Naive thymus-derived CD4-positive, alpha-beta T cell (primary cell): ENCODE measurements at regions of chr6 and their contacts with region 1.

Region 1: GRCh38 chr6:4155848-4156466 is 20.6 kb upstream of the ECI2 start:
- DNase-seq: peak; percentile 33 to 81 (median 71)
- ATAC-seq: peak; percentile 95
- H3K4me3 ChIP-seq: no peak overlapping the region
- H3K4me3 Mint-ChIP-seq: peak overlapping the region in 2 of 10 donors; percentile 20 to 29
- H3K27ac ChIP-seq: no peak overlapping the region
- H3K27ac Mint-ChIP-seq: no peak overlapping the region
- H3K4me1 ChIP-seq: no peaks in the 10 kb centered on the region
- H3K4me1 Mint-ChIP-seq: peaks cover 0 to 24% (median 5%) of the 10 kb centered on the region in 7 donors
- H3K27me3 ChIP-seq: no peaks in the 10 kb centered on the region
- H3K27me3 Mint-ChIP-seq: peaks cover 0 to 12% (median 6%) of the 10 kb centered on the region in 5 donors

Region 2: DNA sequence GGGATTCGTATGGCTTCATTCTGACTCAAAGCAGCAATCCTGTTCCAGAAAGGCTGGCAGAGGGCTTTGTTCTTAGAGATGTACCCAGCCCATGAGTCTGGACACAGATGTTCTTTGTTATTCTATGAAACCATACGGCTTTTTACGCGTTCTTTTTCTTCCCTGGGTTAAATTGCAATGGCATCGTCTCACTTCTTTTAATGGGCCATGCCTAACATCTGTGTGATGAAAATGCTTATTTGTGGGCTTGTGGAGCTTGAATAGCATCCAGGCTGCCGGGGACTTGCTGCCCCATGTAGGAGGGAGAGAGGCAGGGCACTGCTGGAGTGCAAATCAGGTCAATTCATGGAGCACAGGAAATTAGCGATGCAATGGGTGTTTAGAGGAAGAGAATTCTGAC is 287.4 kb before region 1 on chr6:
- CTCF ChIA-PET with region 1: no interaction called
- POLR2A ChIA-PET with region 1: no interaction called
- intact Hi-C with region 1: no loop called
- DNase-seq: no peak
- ATAC-seq: no peak
- H3K4me3 ChIP-seq: no peak overlapping the region
- H3K4me3 Mint-ChIP-seq: no peak overlapping the region
- H3K27ac ChIP-seq: no peak overlapping the region
- H3K27ac Mint-ChIP-seq: peak overlapping the region in 1 of 9 donors; percentile 65
- H3K4me1 ChIP-seq: peaks cover 0 to 15% of the 10 kb centered on the region in 2 donors
- H3K4me1 Mint-ChIP-seq: peaks cover 0 to 22% (median 14%) of the 10 kb centered on the region in 7 donors
- H3K27me3 ChIP-seq: no peaks in the 10 kb centered on the region
- H3K27me3 Mint-ChIP-seq: peaks cover 7 to 19% (median 15%) of the 10 kb centered on the region in 5 donors

Region 3: DNA sequence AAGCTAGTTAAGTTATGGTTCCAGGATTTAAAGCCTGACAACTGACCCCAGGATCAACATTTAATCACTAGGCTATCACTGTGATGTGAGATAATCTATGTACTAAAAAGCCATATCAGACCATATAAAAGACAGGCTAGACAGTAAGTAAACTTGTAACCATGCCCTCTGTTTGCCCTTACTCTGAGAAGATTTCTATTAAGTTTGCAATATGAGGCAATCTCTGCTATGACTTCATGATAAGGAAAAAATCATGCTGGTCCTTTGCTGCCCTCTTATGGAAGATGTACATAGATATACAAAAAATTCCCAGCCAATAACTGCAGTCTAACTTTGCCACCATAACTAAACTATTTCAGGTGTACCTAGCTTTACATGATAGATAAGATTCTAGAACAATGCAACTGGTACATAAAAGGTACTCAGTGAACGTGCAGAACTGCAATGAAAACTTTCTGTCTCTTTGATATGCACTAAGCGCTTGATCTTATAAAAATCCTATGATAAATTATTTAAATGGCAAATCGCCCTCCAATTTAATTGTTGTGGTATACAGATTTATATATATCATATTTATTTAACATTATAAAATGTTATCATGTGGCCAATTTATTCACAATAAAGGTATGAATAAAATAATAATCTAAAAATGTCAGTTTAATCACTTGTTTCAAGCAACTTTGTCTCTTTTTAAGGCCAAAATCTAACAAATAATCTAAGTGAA is 147.5 kb before region 1 on chr6:
- CTCF ChIA-PET with region 1: no interaction called
- POLR2A ChIA-PET with region 1: no interaction called
- intact Hi-C with region 1: loop called in 1 of 2 experiments (anchors 1 kb)
- DNase-seq: peak in 7 of 9 donors; percentile 27 to 63 (median 57)
- ATAC-seq: peak; percentile 94
- H3K4me3 ChIP-seq: no peak overlapping the region
- H3K4me3 Mint-ChIP-seq: peak overlapping the region in 1 of 10 donors; percentile 36
- H3K27ac ChIP-seq: no peak overlapping the region
- H3K27ac Mint-ChIP-seq: peak overlapping the region in 3 of 9 donors; percentile 0 to 63 (median 43)
- H3K4me1 ChIP-seq: peaks cover 15 to 27% of the 10 kb centered on the region in 2 donors
- H3K4me1 Mint-ChIP-seq: peaks cover 40 to 71% (median 60%) of the 10 kb centered on the region in 7 donors
- H3K27me3 ChIP-seq: no peaks in the 10 kb centered on the region
- H3K27me3 Mint-ChIP-seq: no peaks in the 10 kb centered on the region

Region 4: GRCh38 chr6:4055420-4056041 is 100.4 kb before region 1 on chr6:
- CTCF ChIA-PET with region 1: interaction called, 37 read pairs
- POLR2A ChIA-PET with region 1: interaction called, 3 read pairs
- intact Hi-C with region 1: loop called (anchors 1 kb)
- DNase-seq: no peak
- ATAC-seq: peak; percentile 25
- H3K4me3 ChIP-seq: no peak overlapping the region
- H3K4me3 Mint-ChIP-seq: no peak overlapping the region
- H3K27ac ChIP-seq: no peak overlapping the region
- H3K27ac Mint-ChIP-seq: peak overlapping the region in 3 of 9 donors; percentile 63 to 82 (median 64)
- H3K4me1 ChIP-seq: peaks cover 0 to 9% of the 10 kb centered on the region in 2 donors
- H3K4me1 Mint-ChIP-seq: peaks cover 9 to 36% (median 17%) of the 10 kb centered on the region in 7 donors
- H3K27me3 ChIP-seq: no peaks in the 10 kb centered on the region
- H3K27me3 Mint-ChIP-seq: no peaks in the 10 kb centered on the region

Region 5: DNA sequence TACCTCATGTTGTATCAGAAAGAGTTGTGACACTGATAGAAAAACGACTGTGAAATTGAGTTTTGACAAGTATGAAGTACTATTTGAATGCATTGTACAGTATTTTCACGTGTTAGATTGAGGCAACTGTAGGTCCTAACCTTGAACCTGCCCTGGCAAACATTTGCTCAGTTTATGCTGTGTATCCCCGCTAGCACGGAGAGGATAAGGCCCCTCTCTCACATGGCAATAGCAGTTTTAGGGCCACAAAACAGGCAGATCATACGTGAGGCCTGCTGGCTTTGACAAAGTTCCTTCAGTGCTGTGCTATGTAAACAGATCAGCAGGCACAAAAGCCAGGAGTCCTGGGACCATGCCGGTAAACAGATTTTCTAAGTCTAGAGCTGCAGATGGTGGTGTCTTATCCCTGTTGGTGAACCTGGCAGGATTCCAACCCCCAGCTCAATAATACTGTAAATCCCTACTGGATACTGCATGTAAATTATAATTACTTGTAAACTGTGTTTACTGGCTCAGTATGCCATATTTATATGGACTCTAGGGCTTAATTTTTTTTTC is 53.2 kb before region 1 on chr6:
- CTCF ChIA-PET with region 1: no interaction called
- POLR2A ChIA-PET with region 1: no interaction called
- intact Hi-C with region 1: no loop called
- DNase-seq: no peak
- ATAC-seq: no peak
- H3K4me3 ChIP-seq: no peak overlapping the region
- H3K4me3 Mint-ChIP-seq: no peak overlapping the region
- H3K27ac ChIP-seq: no peak overlapping the region
- H3K27ac Mint-ChIP-seq: no peak overlapping the region
- H3K4me1 ChIP-seq: no peaks in the 10 kb centered on the region
- H3K4me1 Mint-ChIP-seq: no peaks in the 10 kb centered on the region
- H3K27me3 ChIP-seq: no peaks in the 10 kb centered on the region
- H3K27me3 Mint-ChIP-seq: peaks cover 0 to 23% (median 5%) of the 10 kb centered on the region in 5 donors

Region 6: GRCh38 chr6:4125936-4126864 is 29.8 kb before region 1 on chr6:
- CTCF ChIA-PET with region 1: no interaction called
- POLR2A ChIA-PET with region 1: no interaction called
- intact Hi-C with region 1: loop called in 1 of 2 experiments (anchors 1 kb)
- DNase-seq: no peak
- ATAC-seq: no peak
- H3K4me3 ChIP-seq: no peak overlapping the region
- H3K4me3 Mint-ChIP-seq: no peak overlapping the region
- H3K27ac ChIP-seq: no peak overlapping the region
- H3K27ac Mint-ChIP-seq: peak overlapping the region in 2 of 9 donors; percentile 12 to 54
- H3K4me1 ChIP-seq: no peaks in the 10 kb centered on the region
- H3K4me1 Mint-ChIP-seq: peaks cover 0 to 7% (median 0%) of the 10 kb centered on the region in 7 donors
- H3K27me3 ChIP-seq: no peaks in the 10 kb centered on the region
- H3K27me3 Mint-ChIP-seq: no peaks in the 10 kb centered on the region

Region 7: DNA sequence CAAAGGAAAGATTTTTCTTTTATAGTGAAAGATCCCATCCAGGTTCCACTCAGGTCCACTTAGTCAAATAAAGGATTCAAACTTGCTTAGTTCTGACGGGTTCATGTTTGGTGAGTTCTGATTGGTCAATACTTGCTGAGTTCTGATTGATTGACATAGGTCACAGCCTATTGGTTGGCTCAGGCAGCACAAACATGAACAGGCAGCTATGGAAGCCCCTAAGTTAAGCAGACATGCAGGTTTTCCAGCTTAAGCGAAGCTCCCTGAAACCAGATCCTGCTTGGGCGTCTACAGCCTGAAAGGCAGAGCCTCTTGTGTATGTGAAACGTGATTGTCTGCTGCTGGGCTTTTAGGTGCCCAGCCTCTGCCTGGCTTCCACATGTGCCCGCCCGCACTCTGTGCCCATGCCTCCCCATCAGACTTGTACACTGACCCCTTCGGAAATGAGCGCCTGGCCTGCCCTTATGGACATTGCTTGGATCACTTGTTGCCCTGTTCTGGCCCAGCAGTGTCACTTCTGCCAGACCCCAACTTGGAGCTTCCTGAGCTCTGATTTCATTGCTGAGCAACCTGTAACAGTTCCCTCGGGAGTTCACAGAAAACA is 24.8 kb after region 1 on chr6:
- CTCF ChIA-PET with region 1: no interaction called
- POLR2A ChIA-PET with region 1: no interaction called
- intact Hi-C with region 1: no loop called
- DNase-seq: no peak
- ATAC-seq: no peak
- H3K4me3 ChIP-seq: no peak overlapping the region
- H3K4me3 Mint-ChIP-seq: no peak overlapping the region
- H3K27ac ChIP-seq: no peak overlapping the region
- H3K27ac Mint-ChIP-seq: no peak overlapping the region
- H3K4me1 ChIP-seq: no peaks in the 10 kb centered on the region
- H3K4me1 Mint-ChIP-seq: peaks cover 0 to 6% (median 0%) of the 10 kb centered on the region in 7 donors
- H3K27me3 ChIP-seq: no peaks in the 10 kb centered on the region
- H3K27me3 Mint-ChIP-seq: peaks cover 4 to 15% (median 9%) of the 10 kb centered on the region in 5 donors

Region 8: DNA sequence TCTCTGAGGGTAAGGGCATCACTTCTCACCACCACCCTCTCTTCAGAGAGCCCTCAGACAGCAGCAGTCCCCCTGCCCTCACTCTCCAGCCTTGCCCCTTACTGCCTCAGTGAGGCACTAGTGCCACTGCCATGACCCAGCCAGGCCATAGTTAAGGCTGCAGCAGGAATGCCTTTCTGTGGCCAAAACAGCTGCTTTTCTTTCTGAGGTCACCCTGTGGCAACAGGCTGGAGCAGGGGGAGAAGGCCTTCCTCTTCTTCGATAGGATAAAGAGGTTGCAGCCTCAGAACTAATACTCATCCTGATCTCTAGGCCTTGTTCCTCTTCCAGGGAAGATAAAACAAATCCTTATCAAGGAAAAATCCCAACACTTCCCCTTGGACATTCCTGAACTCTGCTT is 36.2 kb after region 1 on chr6:
- CTCF ChIA-PET with region 1: no interaction called
- POLR2A ChIA-PET with region 1: no interaction called
- intact Hi-C with region 1: no loop called
- DNase-seq: no peak
- ATAC-seq: no peak
- H3K4me3 ChIP-seq: no peak overlapping the region
- H3K4me3 Mint-ChIP-seq: no peak overlapping the region
- H3K27ac ChIP-seq: no peak overlapping the region
- H3K27ac Mint-ChIP-seq: no peak overlapping the region
- H3K4me1 ChIP-seq: no peaks in the 10 kb centered on the region
- H3K4me1 Mint-ChIP-seq: no peaks in the 10 kb centered on the region
- H3K27me3 ChIP-seq: no peaks in the 10 kb centered on the region
- H3K27me3 Mint-ChIP-seq: peaks cover 0 to 8% (median 4%) of the 10 kb centered on the region in 5 donors

Region 9: GRCh38 chr6:4210629-4211423 is 54.9 kb after region 1 on chr6:
- CTCF ChIA-PET with region 1: interaction called, 8 read pairs
- POLR2A ChIA-PET with region 1: no interaction called
- intact Hi-C with region 1: loop called in 1 of 2 experiments (anchors 5 kb)
- DNase-seq: peak; percentile 17 to 56 (median 45)
- ATAC-seq: peak; percentile 86
- H3K4me3 ChIP-seq: no peak overlapping the region
- H3K4me3 Mint-ChIP-seq: peak overlapping the region in 5 of 10 donors; percentile 1 to 59 (median 25)
- H3K27ac ChIP-seq: no peak overlapping the region
- H3K27ac Mint-ChIP-seq: peak overlapping the region in 6 of 9 donors; percentile 14 to 70 (median 52)
- H3K4me1 ChIP-seq: peaks cover 0 to 16% of the 10 kb centered on the region in 2 donors
- H3K4me1 Mint-ChIP-seq: peaks cover 12 to 36% (median 23%) of the 10 kb centered on the region in 7 donors
- H3K27me3 ChIP-seq: no peaks in the 10 kb centered on the region
- H3K27me3 Mint-ChIP-seq: peaks cover 0 to 7% (median under 1%) of the 10 kb centered on the region in 5 donors